BJ (cell line): ENCODE measurements at regions of chr20 and their contacts with region 1.

Region 1: DNA sequence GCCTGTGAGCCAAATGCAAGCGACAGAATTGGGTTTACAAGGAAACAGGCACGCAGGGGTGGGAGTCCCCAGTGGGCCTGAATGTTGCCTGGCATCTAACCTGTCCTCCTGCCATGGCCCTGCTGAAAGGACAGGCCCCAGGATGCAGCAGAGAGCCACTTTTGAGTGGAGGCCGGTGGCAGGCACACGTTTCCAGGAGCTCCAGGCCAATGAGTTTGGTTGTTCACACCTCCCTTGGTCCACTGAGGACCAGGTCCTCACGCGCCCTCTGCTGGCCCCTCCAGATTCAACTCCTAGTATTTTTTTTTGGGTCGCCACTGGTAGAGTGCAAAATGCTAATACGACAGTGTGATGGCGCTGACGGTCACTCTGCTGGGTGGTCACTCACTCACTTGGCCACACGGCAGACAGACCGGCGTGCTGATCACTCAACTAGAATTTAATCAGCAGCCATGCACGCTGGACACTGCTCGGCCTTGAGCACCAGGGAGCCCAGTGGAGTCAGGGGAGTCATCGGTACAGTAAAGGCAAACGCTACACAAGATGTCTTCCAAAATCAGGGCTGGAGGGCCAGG is 81.7 kb upstream of the NFATC2 start:
- DNase-seq: no peak
- H3K4me3 ChIP-seq: no peak overlapping the region
- H3K27me3 ChIP-seq: no peaks in the 10 kb centered on the region
- CTCF ChIP-seq: peak; percentile 81

Region 2: DNA sequence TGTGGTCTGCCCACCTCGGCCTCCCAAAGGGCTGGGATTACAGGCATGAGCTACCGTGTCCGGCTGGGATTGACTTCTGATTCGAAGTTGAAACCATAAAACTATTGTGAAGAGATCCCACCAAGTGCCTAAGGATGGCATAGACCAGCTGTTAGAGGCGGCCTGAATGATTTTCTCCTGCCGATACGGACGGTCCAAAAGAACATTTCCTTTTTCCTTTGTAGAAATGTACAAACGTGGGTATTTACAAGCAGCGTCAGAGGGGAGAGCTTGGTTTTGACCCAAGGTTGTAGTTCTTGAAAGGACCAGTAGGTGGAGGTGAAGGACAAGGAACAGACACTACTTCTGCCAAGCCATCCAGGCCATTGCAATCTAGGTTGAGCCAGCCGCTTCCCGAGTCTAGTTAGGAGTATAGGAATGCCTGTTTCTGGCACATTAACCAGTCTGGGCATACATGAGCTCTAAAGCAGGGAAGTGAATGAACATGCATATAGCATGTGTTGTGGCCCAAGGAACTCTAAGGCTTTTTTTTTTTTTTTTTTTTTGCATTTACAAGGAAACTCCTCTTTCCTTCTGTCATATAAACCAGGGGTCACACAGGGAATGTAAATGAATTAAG is 636.5 kb before region 1 on chr20:
- CTCF ChIA-PET with region 1: interaction called, 15 read pairs
- POLR2A ChIA-PET with region 1: no interaction called
- DNase-seq: peak; percentile 44
- H3K4me3 ChIP-seq: no peak overlapping the region
- H3K27me3 ChIP-seq: no peaks in the 10 kb centered on the region
- CTCF ChIP-seq: peak; percentile 80